Natural killer cell (primary cell): ENCODE measurements at regions of chr10 and their contacts with region 1.

Region 1: GRCh38 chr10:44974628-44975431 is 3.8 kb downstream of the DEPP1 start:
- DNase-seq: peak; percentile 72 to 81
- ATAC-seq: peak; percentile 91 to 98 (median 97)
- H3K4me3 ChIP-seq: peak overlapping the region; percentile 24
- H3K4me3 Mint-ChIP-seq: peak overlapping the region; percentile 63
- H3K27ac ChIP-seq: no peak overlapping the region
- H3K27ac Mint-ChIP-seq: peak overlapping the region in 1 of 2 donors; percentile 72
- H3K4me1 ChIP-seq: peaks cover 48% of the 10 kb centered on the region
- H3K4me1 Mint-ChIP-seq: peaks cover 25 to 40% of the 10 kb centered on the region in 2 donors
- H3K27me3 ChIP-seq: no peaks in the 10 kb centered on the region
- H3K27me3 Mint-ChIP-seq: no peaks in the 10 kb centered on the region
- CTCF ChIP-seq: peak; percentile 98

Region 2: DNA sequence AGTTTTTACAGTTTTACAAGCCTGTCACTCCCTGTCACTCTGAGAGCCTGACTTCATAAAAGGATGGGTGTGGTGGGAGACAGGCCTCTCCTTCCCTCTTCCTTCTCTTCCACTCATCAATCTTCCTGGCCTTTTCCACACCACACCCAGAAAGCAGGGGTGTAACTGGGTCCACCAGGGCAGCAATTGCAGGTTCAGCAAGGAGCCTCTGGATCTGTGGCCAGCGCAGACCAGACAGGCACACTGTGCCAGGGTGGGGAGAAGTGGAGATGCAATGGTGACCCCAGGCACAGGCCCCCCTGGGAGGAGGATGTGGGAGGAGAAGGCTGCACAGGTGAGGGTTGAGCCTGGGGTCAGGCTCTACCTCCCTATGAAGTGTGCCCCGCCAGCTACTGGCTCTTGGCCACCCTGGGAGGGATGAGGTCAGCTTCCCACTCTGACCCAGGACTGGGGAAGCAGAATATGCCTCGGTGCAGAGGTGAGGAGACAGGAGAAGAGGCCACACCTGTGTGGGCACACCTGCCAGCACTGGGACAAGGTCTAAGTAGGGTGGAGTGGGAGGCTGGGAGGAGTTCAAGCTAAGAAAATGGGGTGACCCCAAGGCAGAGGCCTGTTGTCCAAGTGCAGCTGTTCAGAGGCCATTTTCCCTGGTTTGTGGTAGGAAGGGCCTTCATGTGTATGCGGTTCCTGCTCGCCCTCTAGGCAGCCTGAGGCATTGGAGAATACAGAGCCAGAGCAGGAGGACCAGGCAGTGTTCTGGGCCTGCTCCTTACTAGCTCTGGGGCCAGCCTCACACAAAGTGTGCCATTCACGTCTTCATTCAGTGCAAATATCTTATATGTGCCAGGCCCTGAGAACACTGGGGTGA is 83.9 kb before region 1 on chr10:
- intact Hi-C with region 1: no loop called
- DNase-seq: no peak
- ATAC-seq: no peak
- H3K4me3 ChIP-seq: no peak overlapping the region
- H3K4me3 Mint-ChIP-seq: no peak overlapping the region
- H3K27ac ChIP-seq: no peak overlapping the region
- H3K27ac Mint-ChIP-seq: no peak overlapping the region
- H3K4me1 ChIP-seq: no peaks in the 10 kb centered on the region
- H3K4me1 Mint-ChIP-seq: no peaks in the 10 kb centered on the region
- H3K27me3 ChIP-seq: no peaks in the 10 kb centered on the region
- H3K27me3 Mint-ChIP-seq: peaks cover 0 to 2% of the 10 kb centered on the region in 2 donors
- CTCF ChIP-seq: no peak

Region 3: DNA sequence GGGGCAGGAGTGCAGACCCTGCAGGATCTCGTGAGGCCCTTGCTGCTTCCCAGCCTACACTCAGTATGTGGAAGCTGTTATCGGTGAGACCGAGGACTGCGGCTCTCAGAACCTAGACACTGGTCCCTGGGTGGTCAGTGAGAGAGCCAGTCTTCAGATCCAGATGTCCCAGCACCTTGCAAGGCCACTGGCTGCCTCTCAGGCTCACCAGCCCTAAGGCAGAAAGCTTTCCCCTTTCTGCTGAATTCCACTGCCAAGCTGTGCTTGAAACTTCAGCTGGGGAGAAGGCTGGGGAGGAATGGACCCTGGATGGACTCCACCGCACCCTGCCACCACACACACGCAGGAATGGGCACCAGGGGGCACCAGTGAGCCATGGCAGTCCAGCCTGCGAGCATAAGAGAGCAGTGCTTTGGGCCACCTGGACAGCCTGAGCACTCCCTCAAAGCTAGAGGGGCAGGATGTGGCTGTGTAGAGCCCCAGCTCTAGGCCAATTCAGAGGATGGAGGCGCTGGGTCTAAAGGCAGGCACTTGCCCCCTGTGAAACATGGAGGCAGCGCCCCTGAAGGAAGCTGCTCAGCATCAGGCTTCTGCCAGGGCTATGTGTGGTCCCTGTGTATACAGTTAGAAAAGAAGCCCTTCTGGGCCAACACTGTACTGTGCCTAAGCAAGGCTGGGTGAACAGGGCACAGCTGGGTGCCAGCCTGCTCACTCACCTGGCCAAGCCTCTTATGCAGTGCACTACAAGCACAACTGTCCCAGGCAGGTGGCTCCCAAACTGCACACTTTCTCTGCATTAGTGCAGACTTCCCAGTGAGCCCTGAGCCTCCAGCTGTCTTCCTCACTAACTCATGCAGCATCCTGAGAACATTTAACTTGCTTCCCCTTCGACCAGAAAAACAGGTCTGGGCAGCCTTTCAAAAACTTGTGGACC is 42.0 kb before region 1 on chr10:
- intact Hi-C with region 1: loop called (anchors 1 kb)
- DNase-seq: peak; percentile 84 to 86
- ATAC-seq: peak; percentile 92 to 99 (median 99)
- H3K4me3 ChIP-seq: no peak overlapping the region
- H3K4me3 Mint-ChIP-seq: no peak overlapping the region
- H3K27ac ChIP-seq: no peak overlapping the region
- H3K27ac Mint-ChIP-seq: no peak overlapping the region
- H3K4me1 ChIP-seq: peaks cover 30% of the 10 kb centered on the region
- H3K4me1 Mint-ChIP-seq: peaks cover 23 to 37% of the 10 kb centered on the region in 2 donors
- H3K27me3 ChIP-seq: no peaks in the 10 kb centered on the region
- H3K27me3 Mint-ChIP-seq: peaks cover 0 to 7% of the 10 kb centered on the region in 2 donors
- CTCF ChIP-seq: peak; percentile 97

Region 4: DNA sequence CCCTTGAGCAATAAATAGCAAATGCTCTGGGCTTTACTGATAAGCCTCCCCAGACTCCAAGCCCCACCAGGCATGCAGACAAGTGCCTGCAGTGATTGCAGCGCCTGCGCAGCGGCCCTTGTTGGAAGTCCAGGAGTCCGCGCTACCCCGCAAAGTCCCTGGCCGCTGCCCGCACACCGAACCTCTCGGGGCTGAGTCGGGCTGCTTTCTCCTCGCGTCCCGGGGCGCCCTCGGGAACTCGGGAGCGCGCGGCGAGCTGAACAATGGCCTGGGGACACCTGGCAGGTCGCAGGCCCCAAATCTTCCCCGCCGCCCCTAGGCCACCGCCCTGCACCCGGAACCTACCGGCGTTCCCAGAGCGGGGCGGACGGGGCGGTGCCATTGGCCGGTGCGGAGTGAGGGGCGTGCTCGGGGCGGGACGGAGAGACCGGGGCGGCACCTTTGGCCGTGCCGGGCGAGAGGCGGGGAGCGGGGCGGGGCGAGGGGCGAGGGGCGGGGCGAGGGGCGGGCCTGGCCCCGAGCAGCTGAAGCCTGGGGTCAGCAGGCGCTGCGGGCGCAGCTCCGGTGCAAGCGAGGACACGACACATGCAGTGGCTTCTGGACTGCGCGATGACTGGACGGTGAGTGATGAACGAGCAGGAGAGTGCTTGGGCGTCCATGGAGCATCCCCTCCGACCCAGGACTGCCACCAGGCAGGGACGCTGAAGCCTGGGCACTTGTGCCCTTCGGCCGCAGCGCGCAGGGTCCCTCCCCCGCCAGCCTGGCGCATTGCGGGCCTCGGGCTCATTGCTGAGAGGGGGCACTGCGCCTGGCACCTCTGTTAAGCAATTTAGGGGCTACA is 15.4 kb before region 1 on chr10 and contains the start of gene RASSF4:
- intact Hi-C with region 1: loop called (anchors 2 kb)
- DNase-seq: peak; percentile 86 to 92
- ATAC-seq: peak; percentile 98 to 99 (median 99)
- H3K4me3 ChIP-seq: peak within 1 kb of the TSS; percentile 88
- H3K4me3 Mint-ChIP-seq: peak within 1 kb of the TSS; percentile 95
- H3K27ac ChIP-seq: peak within 1 kb of the TSS; percentile 62
- H3K27ac Mint-ChIP-seq: peak within 1 kb of the TSS; percentile 71 to 76
- H3K4me1 ChIP-seq: peaks cover 54% of the 10 kb centered on the region
- H3K4me1 Mint-ChIP-seq: peaks cover 55 to 82% of the 10 kb centered on the region in 2 donors
- H3K27me3 ChIP-seq: no peaks in the 10 kb centered on the region
- H3K27me3 Mint-ChIP-seq: no peaks in the 10 kb centered on the region
- CTCF ChIP-seq: no peak
- total RNA-seq, gene RASSF4: 99.8 to 116 (median 104) TPM

Region 5: GRCh38 chr10:45063591-45064231 is 88.9 kb after region 1 on chr10:
- intact Hi-C with region 1: no loop called
- DNase-seq: no peak
- ATAC-seq: no peak
- H3K4me3 ChIP-seq: no peak overlapping the region
- H3K4me3 Mint-ChIP-seq: no peak overlapping the region
- H3K27ac ChIP-seq: no peak overlapping the region
- H3K27ac Mint-ChIP-seq: no peak overlapping the region
- H3K4me1 ChIP-seq: no peaks in the 10 kb centered on the region
- H3K4me1 Mint-ChIP-seq: peaks cover 13 to 15% of the 10 kb centered on the region in 2 donors
- H3K27me3 ChIP-seq: no peaks in the 10 kb centered on the region
- H3K27me3 Mint-ChIP-seq: peaks cover 0 to 5% of the 10 kb centered on the region in 2 donors
- CTCF ChIP-seq: no peak